ENCODE measurements at regions of chr11 and their contacts with region 1.

Region 1: DNA sequence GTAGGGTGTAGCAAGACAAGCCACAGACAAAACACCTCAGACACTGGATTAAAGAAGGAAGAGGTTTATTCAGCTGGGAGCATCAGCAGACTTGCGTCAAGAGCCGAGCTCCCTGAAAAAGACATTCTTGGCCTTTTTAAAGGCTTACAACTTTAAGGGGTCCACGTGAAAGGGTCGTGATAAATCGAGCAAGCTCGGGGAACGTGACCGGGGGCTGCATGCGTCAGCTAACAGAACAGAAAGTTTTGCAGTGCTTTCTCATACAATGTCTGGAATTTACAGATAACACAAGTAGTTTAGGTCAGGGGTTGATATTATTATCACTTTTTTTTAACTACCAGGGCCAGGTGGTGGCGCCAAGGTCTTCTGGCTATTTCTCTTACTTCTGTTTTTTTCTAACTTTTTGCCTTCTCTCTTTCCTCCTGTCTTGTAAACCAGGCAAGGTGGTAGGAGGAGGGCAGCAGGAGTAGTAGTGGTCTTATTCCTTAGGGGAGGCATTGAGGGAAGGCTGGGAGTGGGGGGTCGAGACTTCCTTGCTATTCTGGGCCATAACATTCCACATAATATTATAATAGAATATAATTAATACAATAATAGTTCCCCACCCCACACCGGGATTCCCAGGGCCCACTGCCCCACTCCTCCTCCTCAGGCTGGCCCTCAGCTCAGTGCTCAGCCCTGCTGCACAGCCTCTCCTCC is 587 bp upstream of the ALDH3B1 start:
- DNase-seq: peak; percentile 57
- H3K4me3 Mint-ChIP-seq: no peak overlapping the region
- H3K27ac Mint-ChIP-seq: no peak overlapping the region
- H3K4me1 Mint-ChIP-seq: peaks cover 14% of the 10 kb centered on the region
- H3K27me3 Mint-ChIP-seq: peaks cover 4% of the 10 kb centered on the region

Region 2: GRCh38 chr11:68038718-68039525 is 29.4 kb after region 1 on chr11 and contains the start of gene TCIRG1:
- CTCF ChIA-PET with region 1: no interaction called
- intact Hi-C with region 1: loop called (anchors 5 kb)
- DNase-seq: peak; percentile 70
- H3K4me3 Mint-ChIP-seq: peak within 1 kb of the TSS; percentile 86
- H3K27ac Mint-ChIP-seq: peak within 1 kb of the TSS; percentile 88
- H3K4me1 Mint-ChIP-seq: peaks cover 24% of the 10 kb centered on the region
- H3K27me3 Mint-ChIP-seq: no peaks in the 10 kb centered on the region
- total RNA-seq, gene TCIRG1: 137 to 141 TPM

Region 3: GRCh38 chr11:68051191-68052144 is 41.9 kb after region 1 on chr11:
- CTCF ChIA-PET with region 1: no interaction called
- intact Hi-C with region 1: no loop called
- DNase-seq: no peak
- H3K4me3 Mint-ChIP-seq: no peak overlapping the region
- H3K27ac Mint-ChIP-seq: no peak overlapping the region
- H3K4me1 Mint-ChIP-seq: no peaks in the 10 kb centered on the region
- H3K27me3 Mint-ChIP-seq: no peaks in the 10 kb centered on the region

Region 4: GRCh38 chr11:68206187-68206601 is 196.7 kb after region 1 on chr11:
- CTCF ChIA-PET with region 1: interaction called, 6 read pairs
- intact Hi-C with region 1: loop called (anchors 1 kb)
- DNase-seq: peak; percentile 23
- H3K4me3 Mint-ChIP-seq: no peak overlapping the region
- H3K27ac Mint-ChIP-seq: no peak overlapping the region
- H3K4me1 Mint-ChIP-seq: peaks cover 73% of the 10 kb centered on the region
- H3K27me3 Mint-ChIP-seq: no peaks in the 10 kb centered on the region

Measured in activated naive CD4-positive, alpha-beta T cell treated with anti-CD3 and anti-CD28 coated beads for 36 hours (primary cell).